ENCODE measurements at regions of chr3 and their contacts with region 1.

Region 1: GRCh38 chr3:32177702-32178198 is 60.7 kb upstream of the CMTM8 start:
- DNase-seq: peak; percentile 53
- ATAC-seq: peak; percentile 61
- H3K4me3 ChIP-seq: peak overlapping the region in 1 of 5 experiments; percentile 2
- H3K4me3 Mint-ChIP-seq: peak overlapping the region; percentile 14
- H3K27ac ChIP-seq: no peak overlapping the region
- H3K27ac Mint-ChIP-seq: no peak overlapping the region
- H3K4me1 ChIP-seq: peaks cover 4 to 15% of the 10 kb centered on the region in 2 donors
- H3K4me1 Mint-ChIP-seq: peaks cover 21% of the 10 kb centered on the region
- H3K27me3 ChIP-seq: peaks cover 0 to 9% (median 0%) of the 10 kb centered on the region in 4 experiments
- H3K27me3 Mint-ChIP-seq: peaks cover 13% of the 10 kb centered on the region
- CTCF ChIP-seq: no peak

Region 2: GRCh38 chr3:31880020-31880419 is 297.7 kb before region 1 on chr3:
- CTCF ChIA-PET with region 1: no interaction called
- POLR2A ChIA-PET with region 1: no interaction called
- intact Hi-C with region 1: no loop called
- DNase-seq: peak; percentile 63
- ATAC-seq: peak; percentile 65
- H3K4me3 ChIP-seq: no peak overlapping the region
- H3K4me3 Mint-ChIP-seq: no peak overlapping the region
- H3K27ac ChIP-seq: peak overlapping the region in 1 of 2 donors; percentile 53
- H3K27ac Mint-ChIP-seq: peak overlapping the region; percentile 87
- H3K4me1 ChIP-seq: peaks cover 42 to 46% of the 10 kb centered on the region in 2 donors
- H3K4me1 Mint-ChIP-seq: peaks cover 79% of the 10 kb centered on the region
- H3K27me3 ChIP-seq: no peaks in the 10 kb centered on the region
- H3K27me3 Mint-ChIP-seq: no peaks in the 10 kb centered on the region
- CTCF ChIP-seq: peak; percentile 23

Region 3: DNA sequence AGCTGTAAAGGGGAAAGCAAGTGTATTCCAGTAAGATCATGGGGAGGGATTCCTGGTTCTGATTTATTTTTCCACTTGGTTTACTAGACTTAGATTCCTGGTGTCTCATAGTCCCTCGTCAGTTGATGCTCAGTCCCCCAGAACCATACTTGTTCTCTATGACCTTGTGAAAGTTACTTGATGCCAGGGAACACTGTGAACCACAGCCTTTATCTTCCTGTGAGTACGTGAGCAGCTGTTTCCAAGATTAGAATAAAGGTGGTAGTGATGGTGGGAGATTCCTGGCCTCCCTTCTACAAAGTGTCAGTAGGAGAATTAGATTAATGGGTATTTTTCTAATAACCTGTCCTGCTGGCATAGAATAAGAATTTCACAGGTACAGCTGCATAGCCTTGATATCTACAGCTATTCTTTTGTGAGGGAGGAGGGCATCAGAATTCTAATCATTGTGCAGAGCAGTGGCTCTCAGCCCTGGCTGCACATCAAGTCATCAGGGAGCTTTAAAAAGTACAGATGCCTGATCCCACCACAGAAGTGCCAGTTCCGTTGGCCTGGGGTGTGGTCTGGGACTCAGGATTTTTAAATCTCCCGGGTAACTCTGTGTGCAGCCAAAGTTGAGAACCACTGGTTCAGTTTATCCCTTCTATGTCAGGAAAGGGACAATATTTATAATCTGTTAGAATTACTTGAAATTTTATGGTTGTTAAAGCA is 51.3 kb before region 1 on chr3:
- CTCF ChIA-PET with region 1: no interaction called
- POLR2A ChIA-PET with region 1: no interaction called
- intact Hi-C with region 1: no loop called
- DNase-seq: no peak
- ATAC-seq: no peak
- H3K4me3 ChIP-seq: no peak overlapping the region
- H3K4me3 Mint-ChIP-seq: no peak overlapping the region
- H3K27ac ChIP-seq: no peak overlapping the region
- H3K27ac Mint-ChIP-seq: no peak overlapping the region
- H3K4me1 ChIP-seq: no peaks in the 10 kb centered on the region
- H3K4me1 Mint-ChIP-seq: no peaks in the 10 kb centered on the region
- H3K27me3 ChIP-seq: no peaks in the 10 kb centered on the region
- H3K27me3 Mint-ChIP-seq: no peaks in the 10 kb centered on the region
- CTCF ChIP-seq: no peak

Region 4: DNA sequence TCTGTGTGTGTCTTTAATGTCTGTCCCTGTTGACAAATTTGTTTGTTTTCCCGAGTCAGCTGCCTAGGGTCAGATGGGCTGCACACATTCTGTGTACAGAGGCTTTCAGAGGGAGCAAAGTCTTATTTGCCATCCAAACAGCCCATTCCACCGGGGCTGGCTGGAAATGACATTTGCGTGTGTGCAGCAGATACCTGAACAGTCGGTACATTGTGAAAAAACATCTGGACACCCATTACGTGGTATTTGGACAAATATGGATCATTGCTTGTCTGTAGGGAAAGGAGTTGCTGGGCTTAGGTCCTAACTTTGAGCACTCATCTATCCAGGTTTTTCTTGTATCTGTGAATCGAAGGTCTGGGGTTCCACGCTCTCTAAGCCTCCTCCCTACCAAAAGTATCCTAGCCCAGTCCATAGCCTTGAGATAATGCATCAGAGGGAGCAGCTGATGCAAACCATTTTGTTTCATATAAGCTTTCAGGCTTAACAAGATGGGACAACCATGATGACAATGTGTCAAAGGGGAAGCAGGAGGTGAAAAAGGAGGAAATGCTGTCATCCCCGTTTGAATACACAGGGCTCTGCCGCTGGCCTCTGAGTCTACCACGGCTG is 38.5 kb after region 1 on chr3:
- CTCF ChIA-PET with region 1: no interaction called
- POLR2A ChIA-PET with region 1: no interaction called
- intact Hi-C with region 1: no loop called
- DNase-seq: no peak
- ATAC-seq: no peak
- H3K4me3 ChIP-seq: no peak overlapping the region
- H3K4me3 Mint-ChIP-seq: no peak overlapping the region
- H3K27ac ChIP-seq: no peak overlapping the region
- H3K27ac Mint-ChIP-seq: no peak overlapping the region
- H3K4me1 ChIP-seq: no peaks in the 10 kb centered on the region
- H3K4me1 Mint-ChIP-seq: no peaks in the 10 kb centered on the region
- H3K27me3 ChIP-seq: no peaks in the 10 kb centered on the region
- H3K27me3 Mint-ChIP-seq: peaks cover 32% of the 10 kb centered on the region
- CTCF ChIP-seq: no peak

Region 5: GRCh38 chr3:32238453-32239306 is 60.9 kb after region 1 on chr3 and contains the start of gene CMTM8:
- CTCF ChIA-PET with region 1: interaction called, 11 read pairs
- POLR2A ChIA-PET with region 1: no interaction called
- intact Hi-C with region 1: loop called (anchors 5 kb)
- DNase-seq: peak; percentile 63
- ATAC-seq: peak; percentile 74
- H3K4me3 ChIP-seq: peak within 1 kb of the TSS; percentile 0 to 63 (median 57)
- H3K4me3 Mint-ChIP-seq: peak within 1 kb of the TSS; percentile 86
- H3K27ac ChIP-seq: no peak within 1 kb of the TSS
- H3K27ac Mint-ChIP-seq: no peak within 1 kb of the TSS
- H3K4me1 ChIP-seq: peaks cover 17 to 22% of the 10 kb centered on the region in 2 donors
- H3K4me1 Mint-ChIP-seq: peaks cover 24% of the 10 kb centered on the region
- H3K27me3 ChIP-seq: peaks cover 0 to 28% (median 11%) of the 10 kb centered on the region in 4 experiments
- H3K27me3 Mint-ChIP-seq: peaks cover 52% of the 10 kb centered on the region
- CTCF ChIP-seq: no peak
- total RNA-seq, gene CMTM8: 0.25 TPM in 1 of 2 replicates, not detected in the other

Region 6: GRCh38 chr3:32340039-32340438 is 162.3 kb after region 1 on chr3:
- CTCF ChIA-PET with region 1: interaction called, 3 read pairs
- POLR2A ChIA-PET with region 1: no interaction called
- intact Hi-C with region 1: loop called (anchors 1 kb)
- DNase-seq: peak; percentile 32
- ATAC-seq: peak; percentile 45
- H3K4me3 ChIP-seq: no peak overlapping the region
- H3K4me3 Mint-ChIP-seq: no peak overlapping the region
- H3K27ac ChIP-seq: no peak overlapping the region
- H3K27ac Mint-ChIP-seq: no peak overlapping the region
- H3K4me1 ChIP-seq: no peaks in the 10 kb centered on the region
- H3K4me1 Mint-ChIP-seq: no peaks in the 10 kb centered on the region
- H3K27me3 ChIP-seq: peaks cover 0 to 2% (median 0%) of the 10 kb centered on the region in 4 experiments
- H3K27me3 Mint-ChIP-seq: no peaks in the 10 kb centered on the region
- CTCF ChIP-seq: peak; percentile 31

Region 7: GRCh38 chr3:32667122-32667521 is 489.4 kb after region 1 on chr3:
- CTCF ChIA-PET with region 1: interaction called, 4 read pairs
- POLR2A ChIA-PET with region 1: no interaction called
- intact Hi-C with region 1: loop called (anchors 2 kb)
- DNase-seq: no peak
- ATAC-seq: no peak
- H3K4me3 ChIP-seq: no peak overlapping the region
- H3K4me3 Mint-ChIP-seq: no peak overlapping the region
- H3K27ac ChIP-seq: no peak overlapping the region
- H3K27ac Mint-ChIP-seq: no peak overlapping the region
- H3K4me1 ChIP-seq: no peaks in the 10 kb centered on the region
- H3K4me1 Mint-ChIP-seq: no peaks in the 10 kb centered on the region
- H3K27me3 ChIP-seq: no peaks in the 10 kb centered on the region
- H3K27me3 Mint-ChIP-seq: peaks cover 7% of the 10 kb centered on the region
- CTCF ChIP-seq: no peak

Region 8: GRCh38 chr3:32934150-32934742 is 756.5 kb after region 1 on chr3:
- CTCF ChIA-PET with region 1: no interaction called
- POLR2A ChIA-PET with region 1: no interaction called
- intact Hi-C with region 1: loop called (anchors 5 kb)
- DNase-seq: peak; percentile 44
- ATAC-seq: no peak
- H3K4me3 ChIP-seq: no peak overlapping the region
- H3K4me3 Mint-ChIP-seq: no peak overlapping the region
- H3K27ac ChIP-seq: no peak overlapping the region
- H3K27ac Mint-ChIP-seq: no peak overlapping the region
- H3K4me1 ChIP-seq: no peaks in the 10 kb centered on the region
- H3K4me1 Mint-ChIP-seq: no peaks in the 10 kb centered on the region
- H3K27me3 ChIP-seq: no peaks in the 10 kb centered on the region
- H3K27me3 Mint-ChIP-seq: peaks cover 5% of the 10 kb centered on the region
- CTCF ChIP-seq: peak; percentile 72